BJ (cell line): ENCODE measurements at regions of chr10 and their contacts with region 1.

Region 1: DNA sequence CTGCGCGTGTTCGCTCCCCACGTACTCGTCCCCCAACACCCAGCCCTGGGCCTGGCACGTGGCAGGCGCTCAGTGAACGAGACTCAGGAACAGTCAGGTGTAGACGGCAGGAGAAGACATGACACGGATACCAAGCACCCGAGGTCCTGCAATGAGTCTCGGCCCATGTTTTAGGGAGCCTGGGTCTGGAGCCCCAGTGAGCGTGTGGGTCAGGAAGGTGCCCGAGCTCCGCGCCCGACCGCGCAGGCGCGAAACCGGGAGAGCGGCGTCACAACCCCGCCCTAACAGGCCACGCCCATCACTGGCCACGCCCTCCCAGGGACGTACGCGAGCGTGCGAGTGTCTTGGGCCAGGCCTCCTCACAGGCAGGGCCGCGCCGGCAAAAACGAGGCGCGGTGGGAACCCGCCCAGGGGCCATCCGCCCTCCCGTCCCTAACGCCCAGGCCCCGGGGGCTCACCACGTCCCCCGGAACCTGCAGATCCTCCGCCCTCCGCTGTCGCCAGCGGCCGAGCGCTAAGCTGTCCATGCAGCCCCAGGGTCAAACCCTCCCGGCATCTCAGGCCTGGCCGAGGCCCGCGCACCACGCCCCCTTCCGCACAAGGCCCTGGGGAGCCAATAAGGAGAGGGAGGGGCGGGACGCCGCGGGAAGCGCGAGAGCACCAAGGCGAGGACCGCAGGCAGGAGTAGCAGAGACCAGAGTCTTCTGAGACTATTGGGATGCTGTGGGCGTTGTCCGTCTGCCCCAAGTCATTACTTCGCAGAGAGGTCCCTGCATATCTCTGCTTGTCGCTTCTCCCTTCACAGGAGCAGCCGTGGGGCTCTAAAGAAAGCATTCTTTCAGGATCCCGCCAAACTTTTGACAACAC is at the start of gene C10orf143:
- DNase-seq: peak; percentile 83
- H3K4me3 ChIP-seq: peak within 1 kb of the TSS; percentile 75
- H3K27me3 ChIP-seq: no peaks in the 10 kb centered on the region
- CTCF ChIP-seq: no peak
- polyA plus RNA-seq, gene C10orf143: 2.0 and 2.3 TPM in 2 replicates

Region 2: DNA sequence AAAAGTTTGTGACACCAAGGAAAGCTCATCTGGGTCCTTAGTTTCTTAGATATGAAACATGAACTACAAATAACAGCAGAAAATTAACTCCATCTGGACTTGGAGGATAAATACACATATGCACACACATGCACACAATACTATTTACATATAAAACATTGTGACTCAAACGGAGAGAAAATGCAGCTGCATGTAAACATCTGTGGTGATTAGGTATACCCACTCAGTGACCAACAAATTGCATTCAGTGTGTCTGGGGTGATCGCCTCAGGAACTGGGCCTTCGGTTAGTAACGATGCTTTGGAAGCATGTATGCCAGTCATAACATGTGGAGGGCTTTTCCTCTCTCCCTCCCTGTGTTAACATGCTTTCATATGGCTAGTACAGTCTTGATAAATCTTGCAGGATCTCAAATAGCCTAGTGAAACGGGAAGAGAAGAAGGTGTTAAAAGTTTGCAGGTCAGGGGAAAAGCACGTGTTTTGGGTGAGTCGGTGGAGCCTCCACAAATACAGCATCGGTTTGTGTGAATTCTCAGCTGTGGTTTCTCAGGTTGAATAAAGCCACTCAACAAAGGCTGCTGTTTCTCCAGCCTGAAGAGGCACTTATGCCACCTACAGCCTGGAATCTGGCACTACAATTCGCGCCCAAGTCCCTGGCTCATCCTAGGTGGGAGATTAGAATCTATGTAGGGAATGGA is 17.0 kb after region 1 on chr10:
- CTCF ChIA-PET with region 1: interaction called, 32 read pairs
- POLR2A ChIA-PET with region 1: no interaction called
- DNase-seq: peak; percentile 20
- H3K4me3 ChIP-seq: no peak overlapping the region
- H3K27me3 ChIP-seq: peaks cover 3% of the 10 kb centered on the region; the same call in 1 of the 2 replicates
- CTCF ChIP-seq: peak; percentile 94

Region 3: DNA sequence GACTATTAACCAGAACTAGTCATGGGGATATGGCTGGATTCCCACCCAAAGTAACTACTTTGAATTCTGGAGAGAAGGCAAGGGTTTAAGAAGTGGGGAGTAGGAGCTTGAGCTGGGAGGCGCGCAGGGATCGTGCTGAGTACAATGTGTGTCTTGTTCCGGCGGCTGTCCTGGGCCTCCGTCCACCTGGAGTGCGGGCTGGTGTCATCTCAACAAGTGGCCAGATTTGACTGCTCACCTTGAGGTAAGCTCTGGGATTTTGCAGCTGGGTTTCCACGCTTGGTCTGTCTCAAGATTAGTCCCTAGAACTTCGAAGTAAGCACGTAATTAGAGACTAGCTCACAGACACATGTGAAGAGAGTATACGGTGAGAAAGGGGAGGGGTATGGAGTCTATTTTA is 75.1 kb after region 1 on chr10:
- CTCF ChIA-PET with region 1: no interaction called
- POLR2A ChIA-PET with region 1: no interaction called
- DNase-seq: no peak
- H3K4me3 ChIP-seq: no peak overlapping the region
- H3K27me3 ChIP-seq: no peaks in the 10 kb centered on the region
- CTCF ChIP-seq: no peak